ENCODE measurements at regions of chr6 and their contacts with region 1.

Region 1: DNA sequence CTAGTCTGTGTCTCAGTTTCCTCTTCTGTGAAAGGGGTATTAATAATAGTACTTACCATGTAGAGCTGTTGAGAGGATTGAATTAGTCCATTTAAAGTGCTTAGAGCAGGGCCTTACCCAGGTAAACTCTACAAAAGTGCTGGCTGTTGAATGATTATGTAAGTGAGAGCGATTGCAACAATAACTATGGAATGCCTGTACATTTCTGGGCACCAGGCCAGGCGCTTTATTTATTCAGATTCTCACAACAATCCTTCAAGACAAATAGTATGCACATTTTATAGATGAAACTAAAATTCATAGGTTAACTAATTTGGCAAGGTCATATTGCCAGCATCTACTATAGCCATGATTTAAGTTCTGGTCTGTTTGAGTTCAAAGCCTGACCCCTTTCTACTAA is 78.3 kb upstream of the MMS22L start:
- H3K4me3 ChIP-seq: no peak overlapping the region
- H3K27ac ChIP-seq: no peak overlapping the region
- H3K4me1 ChIP-seq: no peaks in the 10 kb centered on the region
- CTCF ChIP-seq: no peak

Region 2: DNA sequence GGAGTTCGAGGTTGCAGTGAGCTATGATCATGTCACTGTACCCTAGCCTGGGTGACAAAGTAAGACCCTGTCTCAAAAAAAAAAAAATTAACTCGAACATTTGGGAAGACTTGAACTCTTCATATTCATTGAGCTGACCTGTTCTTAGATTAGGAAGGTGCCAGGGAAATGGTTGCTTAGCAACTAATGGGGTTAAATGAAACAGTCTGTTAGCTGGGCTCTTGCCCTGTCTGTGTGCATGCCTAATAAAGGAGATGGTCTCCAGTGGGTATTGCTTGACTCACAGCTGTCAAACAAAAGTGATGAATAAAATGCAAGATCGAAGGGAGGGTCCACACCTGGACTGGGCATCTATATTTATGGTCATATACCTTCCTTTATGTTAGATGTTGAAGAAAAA is 335.0 kb before region 1 on chr6:
- CTCF ChIA-PET with region 1: no interaction called
- POLR2A ChIA-PET with region 1: no interaction called
- H3K4me3 ChIP-seq: no peak overlapping the region
- H3K27ac ChIP-seq: no peak overlapping the region
- H3K4me1 ChIP-seq: no peaks in the 10 kb centered on the region
- CTCF ChIP-seq: no peak

Region 3: DNA sequence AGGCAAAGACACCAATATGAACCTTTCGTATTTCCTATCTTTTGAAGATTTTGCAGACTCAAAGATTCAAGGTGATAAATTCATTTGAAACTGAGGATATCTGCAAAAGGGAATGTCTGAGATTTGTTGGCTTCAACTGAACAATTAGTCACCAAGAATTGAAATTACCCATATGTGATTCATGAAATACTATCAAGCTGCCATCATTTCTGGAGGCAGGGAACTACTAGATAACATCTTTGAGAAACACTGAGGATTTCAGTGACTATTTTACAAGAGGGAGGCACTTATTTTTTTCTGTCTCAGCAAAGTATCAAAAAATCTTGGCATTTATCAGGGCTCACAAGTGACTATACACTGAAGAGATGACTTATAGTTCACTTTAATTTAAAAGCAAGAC is 38.5 kb before region 1 on chr6:
- CTCF ChIA-PET with region 1: no interaction called
- POLR2A ChIA-PET with region 1: no interaction called
- H3K4me3 ChIP-seq: no peak overlapping the region
- H3K27ac ChIP-seq: no peak overlapping the region
- H3K4me1 ChIP-seq: no peaks in the 10 kb centered on the region
- CTCF ChIP-seq: no peak

Region 4: GRCh38 chr6:97394160-97394748 is 33.0 kb after region 1 on chr6:
- CTCF ChIA-PET with region 1: interaction called, 11 read pairs
- POLR2A ChIA-PET with region 1: no interaction called
- H3K4me3 ChIP-seq: no peak overlapping the region
- H3K27ac ChIP-seq: no peak overlapping the region
- H3K4me1 ChIP-seq: no peaks in the 10 kb centered on the region
- CTCF ChIP-seq: peak; percentile 47; the same call in 1 of the 2 replicates

Measured in HEK293 (cell line).